ENCODE measurements at regions of chr3 and their contacts with region 1.

Region 1: DNA sequence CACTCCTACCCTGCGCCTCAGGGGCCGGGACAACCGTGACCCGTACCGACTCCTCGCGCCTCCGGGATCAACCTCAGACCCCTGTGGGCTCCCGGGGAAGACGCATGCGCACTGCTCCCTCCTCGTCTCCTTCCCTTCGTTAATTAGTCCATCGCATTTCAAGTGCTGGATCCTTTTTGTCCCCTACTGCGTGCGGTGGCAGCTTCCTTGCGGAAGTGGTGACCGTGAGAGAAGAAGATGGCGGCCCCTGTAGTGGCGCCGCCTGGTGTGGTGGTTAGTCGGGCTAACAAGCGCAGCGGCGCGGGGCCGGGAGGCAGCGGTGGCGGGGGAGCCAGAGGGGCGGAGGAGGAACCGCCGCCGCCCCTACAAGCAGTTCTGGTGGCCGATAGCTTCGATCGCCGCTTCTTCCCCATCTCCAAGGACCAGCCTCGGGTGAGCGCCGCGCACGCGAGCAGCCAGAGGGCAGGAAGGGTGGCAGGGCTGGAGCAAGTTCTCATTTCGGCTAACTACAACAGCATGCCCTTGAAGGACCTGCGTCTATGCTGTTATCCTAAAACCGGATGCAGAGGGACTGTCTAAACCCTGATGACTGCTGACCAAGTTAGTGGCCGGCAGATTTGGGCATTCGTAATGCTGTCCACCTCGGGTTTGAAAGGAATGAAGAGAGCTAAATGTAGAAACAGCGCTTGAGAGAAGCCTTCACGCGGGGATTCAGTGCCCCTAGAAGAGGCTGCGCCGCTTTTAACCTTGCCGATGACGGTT is at the start of gene EIF2B5:
- DNase-seq: peak; percentile 94
- ATAC-seq: peak; percentile 95 to 96
- total RNA-seq, gene EIF2B5: 29.1 to 30.5 TPM

Region 2: GRCh38 chr3:183878071-183878470 is 257.3 kb before region 1 on chr3:
- intact Hi-C with region 1: no loop called
- DNase-seq: no peak
- ATAC-seq: peak; percentile 34 to 67

Region 3: DNA sequence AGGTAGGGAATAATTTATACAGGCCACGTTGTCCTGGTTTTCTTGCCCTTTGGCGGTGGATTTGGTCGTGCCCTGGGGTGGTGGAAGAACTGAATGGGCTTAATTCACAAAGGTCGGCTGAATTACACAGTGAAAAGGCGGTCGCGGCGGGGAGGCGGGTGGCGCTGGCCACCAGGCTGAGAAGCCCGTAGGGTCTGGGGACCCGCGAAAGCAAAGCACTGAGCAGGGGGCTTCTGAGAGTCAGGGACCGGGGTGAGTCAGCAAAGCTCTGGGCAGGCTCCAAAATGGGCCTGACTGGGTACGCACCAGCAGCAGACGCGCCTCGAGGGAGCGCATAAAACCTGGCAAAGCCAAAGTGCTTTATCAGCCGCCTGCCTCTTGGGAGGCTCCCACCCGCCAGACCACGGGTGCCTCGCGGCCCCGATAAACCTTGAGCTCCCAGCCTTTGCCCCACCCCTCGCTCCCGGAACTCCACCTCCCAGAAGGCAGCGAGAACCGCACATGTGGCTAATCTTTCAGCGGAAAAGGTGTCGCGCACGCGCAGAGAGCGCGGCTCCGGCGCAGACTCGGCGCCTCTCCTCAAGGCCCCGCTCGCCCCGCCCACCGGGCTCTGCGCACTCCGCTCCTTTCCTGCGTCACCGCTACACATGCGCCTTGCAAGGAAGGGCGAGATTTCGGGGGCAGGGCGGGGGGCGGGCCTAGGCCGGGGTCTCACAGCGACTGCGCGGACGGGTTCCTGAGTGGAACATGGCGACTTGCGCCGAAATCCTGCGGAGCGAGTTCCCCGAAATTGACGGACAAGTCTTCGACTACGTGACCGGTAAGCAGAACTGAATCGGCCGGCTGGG is 50.4 kb after region 1 on chr3 and contains the start of gene ABCF3:
- intact Hi-C with region 1: loop called in 1 of 2 experiments (anchors 5 kb)
- DNase-seq: peak; percentile 100
- ATAC-seq: peak; percentile 96 to 98
- total RNA-seq, gene ABCF3: 54.4 to 78.2 TPM

Region 4: GRCh38 chr3:184218814-184219213 is 83.5 kb after region 1 on chr3:
- intact Hi-C with region 1: no loop called
- DNase-seq: no peak
- ATAC-seq: no peak